HEK293 (cell line): ENCODE measurements at regions of chr5 and their contacts with region 1.

Region 1: DNA sequence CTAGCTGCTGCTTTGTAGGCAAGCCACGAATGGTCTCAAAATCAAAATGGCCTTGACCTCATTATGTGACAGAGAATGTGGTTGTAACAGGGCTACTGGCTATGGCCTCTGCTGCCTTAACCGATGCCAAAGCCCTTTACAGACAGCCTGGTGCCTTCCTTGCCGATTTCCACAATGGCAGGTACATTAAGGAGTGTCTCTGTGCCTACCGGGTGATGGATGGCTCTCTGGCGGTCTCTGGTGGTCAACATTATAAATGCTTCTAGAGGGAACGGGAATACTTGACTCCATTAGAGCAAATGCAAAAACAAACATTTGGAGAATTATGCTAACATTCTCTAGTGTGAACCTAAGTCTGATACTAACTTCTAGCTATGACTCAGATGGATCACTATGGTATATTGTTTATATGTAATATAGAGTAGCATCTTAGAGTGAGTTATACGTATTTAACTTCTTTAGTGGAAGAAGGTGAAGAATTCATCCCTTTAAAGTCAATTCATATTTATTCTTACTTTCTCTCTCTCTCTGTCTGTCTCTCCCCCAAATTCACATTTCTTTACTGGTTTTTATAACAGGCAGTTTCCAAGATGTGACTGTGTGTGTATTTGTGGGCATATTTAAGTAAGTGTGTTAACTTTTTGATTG is 52.5 kb downstream of the RPS23 start:
- H3K4me3 ChIP-seq: no peak overlapping the region
- H3K27ac ChIP-seq: no peak overlapping the region
- H3K4me1 ChIP-seq: peaks cover 4% of the 10 kb centered on the region; the same call in 1 of the 2 replicates
- CTCF ChIP-seq: peak; percentile 74

Region 2: DNA sequence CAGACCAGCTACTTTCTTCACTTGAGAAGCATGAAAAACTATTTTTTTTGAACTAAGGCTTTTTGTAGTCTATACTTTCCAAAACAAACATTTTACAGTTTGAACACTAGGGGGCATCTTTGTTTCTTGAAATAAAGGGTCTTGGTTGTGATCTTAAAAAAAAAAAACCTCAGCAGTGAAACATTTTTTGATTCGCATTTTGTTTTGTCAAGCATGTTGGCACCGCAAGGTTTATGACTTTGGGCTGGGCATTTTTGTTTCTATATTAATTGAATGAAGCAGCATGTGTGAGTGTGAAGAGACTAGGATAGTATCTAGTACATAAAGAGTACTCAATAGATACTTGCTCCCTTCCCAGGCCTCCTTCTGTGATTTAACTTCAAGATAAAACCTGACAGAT is 800.1 kb before region 1 on chr5:
- CTCF ChIA-PET with region 1: interaction called, 14 read pairs
- POLR2A ChIA-PET with region 1: no interaction called
- H3K4me3 ChIP-seq: no peak overlapping the region
- H3K27ac ChIP-seq: no peak overlapping the region
- H3K4me1 ChIP-seq: peaks cover 22% of the 10 kb centered on the region
- CTCF ChIP-seq: no peak

Region 3: GRCh38 chr5:82031220-82032119 is 194.2 kb before region 1 on chr5:
- CTCF ChIA-PET with region 1: no interaction called
- POLR2A ChIA-PET with region 1: no interaction called
- H3K4me3 ChIP-seq: no peak overlapping the region
- H3K27ac ChIP-seq: no peak overlapping the region
- H3K4me1 ChIP-seq: no peaks in the 10 kb centered on the region
- CTCF ChIP-seq: no peak